MCF 10A (cell line): ENCODE measurements at regions of chr1 and their contacts with region 1.

Region 1: DNA sequence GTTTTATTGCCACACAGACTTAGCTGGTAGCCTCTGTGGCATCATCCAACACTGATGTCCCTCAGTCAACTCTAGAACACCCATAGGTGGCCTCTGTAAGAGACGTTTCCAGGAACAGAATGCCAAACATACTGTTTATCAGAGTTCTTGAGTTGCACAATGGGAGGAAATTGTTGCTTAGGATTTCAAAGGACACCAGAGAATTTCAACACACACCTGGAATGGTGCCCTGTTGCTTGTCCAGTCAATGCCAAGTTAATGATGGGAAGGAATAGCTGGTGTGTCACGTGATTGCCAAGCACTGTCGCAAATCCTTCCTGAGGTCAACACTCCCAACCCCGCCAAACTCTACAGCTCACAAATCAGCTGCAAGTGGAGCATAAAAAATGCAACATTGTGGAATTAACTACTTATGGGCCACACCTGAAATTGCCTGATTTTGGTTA is 28.6 kb upstream of the DUSP23 start:
- DNase-seq: peak; percentile 100
- H3K4me3 Mint-ChIP-seq: no peak overlapping the region
- H3K27ac Mint-ChIP-seq: peak overlapping the region; percentile 78
- H3K4me1 Mint-ChIP-seq: peaks cover 44% of the 10 kb centered on the region
- H3K27me3 Mint-ChIP-seq: no peaks in the 10 kb centered on the region
- CTCF ChIP-seq: no peak

Region 2: DNA sequence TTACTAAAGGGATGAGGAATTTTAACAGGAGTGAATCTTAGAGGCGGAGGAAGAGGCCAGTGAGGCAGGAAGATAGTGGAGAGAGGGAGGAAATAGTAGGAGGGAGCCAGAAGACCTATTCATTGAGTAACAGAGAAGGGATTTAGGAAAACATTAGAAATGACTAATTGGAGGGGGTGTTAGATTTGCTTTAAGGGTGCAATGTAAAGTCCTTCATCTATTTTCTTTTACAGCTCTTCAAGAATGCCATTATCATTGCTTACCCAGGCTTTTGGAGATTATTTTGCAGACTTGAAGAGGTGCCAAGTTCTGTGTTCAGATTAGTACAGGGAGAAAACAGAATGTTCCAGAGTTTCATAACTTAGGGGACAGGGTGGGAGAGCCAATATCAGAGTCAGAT is 278.8 kb before region 1 on chr1:
- CTCF ChIA-PET with region 1: interaction called, 3 read pairs
- POLR2A ChIA-PET with region 1: interaction called, 10 read pairs
- intact Hi-C with region 1: no loop called
- DNase-seq: peak; percentile 90
- H3K4me3 Mint-ChIP-seq: no peak overlapping the region
- H3K27ac Mint-ChIP-seq: peak overlapping the region; percentile 89
- H3K4me1 Mint-ChIP-seq: peaks cover 52% of the 10 kb centered on the region
- H3K27me3 Mint-ChIP-seq: no peaks in the 10 kb centered on the region
- CTCF ChIP-seq: no peak

Region 3: GRCh38 chr1:159492575-159493323 is 259.4 kb before region 1 on chr1:
- CTCF ChIA-PET with region 1: no interaction called
- POLR2A ChIA-PET with region 1: interaction called, 6 read pairs
- intact Hi-C with region 1: loop called (anchors 10 kb)
- DNase-seq: peak; percentile 81
- H3K4me3 Mint-ChIP-seq: no peak overlapping the region
- H3K27ac Mint-ChIP-seq: peak overlapping the region; percentile 80
- H3K4me1 Mint-ChIP-seq: peaks cover 17% of the 10 kb centered on the region
- H3K27me3 Mint-ChIP-seq: no peaks in the 10 kb centered on the region
- CTCF ChIP-seq: no peak

Region 4: GRCh38 chr1:159598196-159598595 is 154.0 kb before region 1 on chr1:
- CTCF ChIA-PET with region 1: interaction called, 3 read pairs
- POLR2A ChIA-PET with region 1: interaction called, 3 read pairs
- intact Hi-C with region 1: loop called (anchors 1 kb)
- DNase-seq: peak; percentile 91
- H3K4me3 Mint-ChIP-seq: peak overlapping the region; percentile 2
- H3K27ac Mint-ChIP-seq: peak overlapping the region; percentile 75
- H3K4me1 Mint-ChIP-seq: peaks cover 66% of the 10 kb centered on the region
- H3K27me3 Mint-ChIP-seq: no peaks in the 10 kb centered on the region
- CTCF ChIP-seq: no peak

Region 5: GRCh38 chr1:159641221-159641620 is 110.9 kb before region 1 on chr1:
- CTCF ChIA-PET with region 1: no interaction called
- POLR2A ChIA-PET with region 1: no interaction called
- intact Hi-C with region 1: no loop called
- DNase-seq: no peak
- H3K4me3 Mint-ChIP-seq: no peak overlapping the region
- H3K27ac Mint-ChIP-seq: no peak overlapping the region
- H3K4me1 Mint-ChIP-seq: peaks cover 6% of the 10 kb centered on the region
- H3K27me3 Mint-ChIP-seq: no peaks in the 10 kb centered on the region
- CTCF ChIP-seq: no peak

Region 6: GRCh38 chr1:159798893-159799292 is 46.7 kb after region 1 on chr1:
- CTCF ChIA-PET with region 1: no interaction called
- POLR2A ChIA-PET with region 1: no interaction called
- intact Hi-C with region 1: no loop called
- DNase-seq: peak; percentile 95
- H3K4me3 Mint-ChIP-seq: no peak overlapping the region
- H3K27ac Mint-ChIP-seq: no peak overlapping the region
- H3K4me1 Mint-ChIP-seq: no peaks in the 10 kb centered on the region
- H3K27me3 Mint-ChIP-seq: no peaks in the 10 kb centered on the region
- CTCF ChIP-seq: peak; percentile 83

Region 7: GRCh38 chr1:159851407-159851806 is 99.2 kb after region 1 on chr1:
- CTCF ChIA-PET with region 1: no interaction called
- POLR2A ChIA-PET with region 1: no interaction called
- intact Hi-C with region 1: no loop called
- DNase-seq: peak; percentile 27
- H3K4me3 Mint-ChIP-seq: no peak overlapping the region
- H3K27ac Mint-ChIP-seq: no peak overlapping the region
- H3K4me1 Mint-ChIP-seq: peaks cover 39% of the 10 kb centered on the region
- H3K27me3 Mint-ChIP-seq: no peaks in the 10 kb centered on the region
- CTCF ChIP-seq: peak; percentile 8